ENCODE measurements at regions of chr7 and their contacts with region 1.

Region 1: GRCh38 chr7:149460493-149461277 is at the start of gene ZNF777:
- DNase-seq: peak; percentile 75
- ATAC-seq: peak; percentile 97
- H3K4me3 ChIP-seq: peak within 1 kb of the TSS; percentile 83
- H3K27ac ChIP-seq: peak within 1 kb of the TSS; percentile 65
- H3K4me1 ChIP-seq: peaks cover 12% of the 10 kb centered on the region
- H3K27me3 ChIP-seq: no peaks in the 10 kb centered on the region
- CTCF ChIP-seq: peak; percentile 70
- EP300 ChIP-seq: peak in 1 of 2 experiments; percentile 19; a peak in 1 of 4 replicates
- POLR2A ChIP-seq: peak; percentile 47 to 81
- RAD21 ChIP-seq: peak; percentile 65
- total RNA-seq, gene ZNF777: 4.4 and 6.0 TPM in 2 replicates

Region 2: DNA sequence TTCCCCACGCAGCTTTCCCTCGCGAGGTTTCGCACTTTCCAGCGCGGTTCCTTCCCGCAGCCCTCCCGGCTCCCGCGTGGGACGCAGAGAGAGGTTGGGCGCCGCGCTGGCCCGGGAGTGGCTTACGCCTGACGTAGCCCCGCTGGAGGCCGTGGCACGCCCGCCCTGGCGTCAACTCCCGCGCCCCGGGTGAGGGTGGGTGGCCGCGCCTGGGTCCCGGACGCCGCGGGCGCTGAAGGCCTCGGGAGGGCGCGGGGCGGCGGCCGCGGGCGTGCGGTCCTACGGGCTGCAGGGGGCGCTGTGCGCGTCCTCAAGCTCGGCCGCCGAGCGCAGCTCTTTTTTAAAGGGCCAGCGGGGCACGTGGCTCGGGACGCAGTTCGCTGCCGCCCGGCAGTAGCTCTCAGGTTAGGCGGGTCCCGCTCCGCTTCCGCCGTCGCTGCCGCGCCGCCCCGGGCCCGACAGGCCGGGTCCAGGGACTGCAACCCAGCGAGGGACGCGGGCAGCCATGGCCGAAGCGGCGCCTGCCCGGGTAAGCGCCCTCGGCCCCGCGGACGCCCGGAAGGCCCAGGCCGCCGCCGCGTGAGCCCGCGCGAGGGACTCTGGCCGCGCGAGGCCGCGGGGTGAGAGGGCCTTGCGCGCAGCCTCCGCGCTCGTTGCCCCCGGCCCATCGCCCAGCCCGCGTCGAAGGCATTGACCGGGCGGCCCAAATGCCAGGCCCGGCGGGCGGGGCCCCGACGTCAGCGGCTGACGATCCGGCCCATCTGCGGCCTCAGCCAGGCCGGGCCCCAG is 198.7 kb before region 1 on chr7 and contains the start of gene ZNF783:
- CTCF ChIA-PET with region 1: no interaction called
- POLR2A ChIA-PET with region 1: interaction called, 16 read pairs
- in situ Hi-C with region 1: no loop called
- intact Hi-C with region 1: no loop called
- DNase-seq: peak; percentile 70
- ATAC-seq: peak; percentile 95
- H3K4me3 ChIP-seq: peak within 1 kb of the TSS; percentile 58 to 73 (median 69); a peak in 5 of 6 replicates
- H3K27ac ChIP-seq: peak within 1 kb of the TSS; percentile 48
- H3K4me1 ChIP-seq: peaks cover 17% of the 10 kb centered on the region
- H3K27me3 ChIP-seq: no peaks in the 10 kb centered on the region
- CTCF ChIP-seq: peak; percentile 75
- EP300 ChIP-seq: no peak
- POLR2A ChIP-seq: peak; percentile 41 to 53; a peak in 3 of 4 replicates
- RAD21 ChIP-seq: peak; percentile 88
- total RNA-seq, gene ZNF783: 1.3 and 5.2 TPM in 2 replicates

Region 3: DNA sequence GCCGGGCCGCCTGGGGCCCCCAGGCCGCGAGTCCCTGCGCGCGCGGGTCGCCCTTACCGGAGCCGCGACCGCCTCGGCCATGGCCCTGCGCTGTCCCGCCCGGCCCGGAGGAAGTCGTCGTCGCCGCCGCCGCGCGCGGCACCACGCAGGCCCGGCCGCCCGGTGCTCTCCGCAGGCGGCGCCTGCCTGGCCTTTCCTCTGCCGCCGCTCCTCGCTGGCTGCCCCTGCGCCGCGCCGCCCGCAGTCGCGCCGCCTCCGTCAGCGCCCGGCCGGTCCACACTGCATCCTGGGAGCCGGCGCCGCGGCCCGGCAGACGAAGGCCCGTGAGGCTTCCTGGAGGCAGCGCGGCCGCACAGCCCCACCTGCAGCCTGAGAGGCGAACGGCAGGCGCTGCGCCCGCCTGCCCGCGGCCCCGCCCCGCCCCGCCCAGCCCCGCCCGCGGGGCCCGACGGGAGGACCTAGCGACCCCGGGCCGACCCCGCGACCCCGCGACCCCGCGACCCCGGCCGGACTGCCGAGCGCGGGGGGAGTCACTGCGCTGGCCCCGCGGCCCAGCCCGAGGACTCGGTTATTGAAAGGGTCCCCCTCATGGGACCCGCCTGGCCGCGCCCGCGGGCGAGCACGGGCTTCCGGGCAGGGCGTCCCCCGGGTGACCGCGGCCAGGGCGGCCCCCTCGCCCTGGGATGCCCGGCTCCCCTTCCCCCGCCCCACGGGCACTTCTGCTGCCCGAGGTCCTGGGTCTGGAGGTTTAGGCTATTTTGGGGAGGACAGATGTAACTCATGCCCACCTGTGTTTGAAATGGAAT is 37.0 kb after region 1 on chr7 and contains the start of gene ZNF746:
- CTCF ChIA-PET with region 1: interaction called, 8 read pairs
- POLR2A ChIA-PET with region 1: interaction called, 9 read pairs
- in situ Hi-C with region 1: no loop called
- intact Hi-C with region 1: loop called (anchors 1 kb)
- DNase-seq: peak; percentile 67
- ATAC-seq: peak; percentile 85
- H3K4me3 ChIP-seq: peak within 1 kb of the TSS; percentile 68 to 85 (median 77)
- H3K27ac ChIP-seq: peak within 1 kb of the TSS; percentile 55
- H3K4me1 ChIP-seq: peaks cover 18% of the 10 kb centered on the region
- H3K27me3 ChIP-seq: peaks cover 2 to 39% of the 10 kb centered on the region in 2 experiments; a peak in 4 of 5 replicates
- CTCF ChIP-seq: peak; percentile 76
- EP300 ChIP-seq: no peak
- POLR2A ChIP-seq: peak in 1 of 2 experiments; percentile 47; a peak in 2 of 4 replicates
- RAD21 ChIP-seq: peak; percentile 88
- total RNA-seq, gene ZNF746: 8.0 and 8.1 TPM in 2 replicates